ENCODE measurements at regions of chr10 and their contacts with region 1.

Region 1: GRCh38 chr10:6185039-6185716 is 17.6 kb upstream of the PFKFB3 start:
- DNase-seq: no peak
- ATAC-seq: no peak
- H3K4me3 ChIP-seq: no peak overlapping the region
- H3K4me3 Mint-ChIP-seq: peak overlapping the region in 1 of 3 donors; percentile 1
- H3K27ac ChIP-seq: no peak overlapping the region
- H3K27ac Mint-ChIP-seq: no peak overlapping the region
- H3K4me1 ChIP-seq: no peaks in the 10 kb centered on the region
- H3K4me1 Mint-ChIP-seq: peaks cover 7 to 36% (median 29%) of the 10 kb centered on the region in 3 donors
- H3K27me3 ChIP-seq: no peaks in the 10 kb centered on the region
- H3K27me3 Mint-ChIP-seq: no peaks in the 10 kb centered on the region

Region 2: DNA sequence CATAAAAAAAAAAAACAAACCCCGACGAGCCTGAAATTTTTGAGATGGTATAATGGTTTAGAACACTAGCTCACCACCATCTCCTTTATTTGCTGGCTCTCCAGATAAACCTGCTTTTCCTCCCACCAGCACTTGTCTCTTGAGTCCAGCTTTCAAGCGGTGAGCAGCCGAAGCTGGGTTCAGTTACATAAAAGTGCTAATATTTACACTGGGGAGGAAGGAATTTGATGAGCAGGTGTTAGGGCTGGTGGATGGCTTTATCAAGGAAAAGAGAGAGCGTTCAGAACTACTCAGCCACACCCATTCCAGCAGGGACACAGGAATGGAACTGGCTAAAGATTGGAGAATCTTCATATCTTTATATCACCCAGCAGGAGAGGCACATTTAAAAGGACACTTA is 667.0 kb before region 1 on chr10:
- CTCF ChIA-PET with region 1: no interaction called
- POLR2A ChIA-PET with region 1: no interaction called
- DNase-seq: no peak
- ATAC-seq: no peak
- H3K4me3 ChIP-seq: no peak overlapping the region
- H3K4me3 Mint-ChIP-seq: no peak overlapping the region
- H3K27ac ChIP-seq: no peak overlapping the region
- H3K27ac Mint-ChIP-seq: no peak overlapping the region
- H3K4me1 ChIP-seq: peaks cover 2 to 5% of the 10 kb centered on the region in 2 experiments
- H3K4me1 Mint-ChIP-seq: peaks cover 5 to 7% (median 5%) of the 10 kb centered on the region in 3 donors
- H3K27me3 ChIP-seq: peaks cover 0 to 11% of the 10 kb centered on the region in 2 experiments
- H3K27me3 Mint-ChIP-seq: peaks cover 3 to 12% of the 10 kb centered on the region in 2 donors

Region 3: DNA sequence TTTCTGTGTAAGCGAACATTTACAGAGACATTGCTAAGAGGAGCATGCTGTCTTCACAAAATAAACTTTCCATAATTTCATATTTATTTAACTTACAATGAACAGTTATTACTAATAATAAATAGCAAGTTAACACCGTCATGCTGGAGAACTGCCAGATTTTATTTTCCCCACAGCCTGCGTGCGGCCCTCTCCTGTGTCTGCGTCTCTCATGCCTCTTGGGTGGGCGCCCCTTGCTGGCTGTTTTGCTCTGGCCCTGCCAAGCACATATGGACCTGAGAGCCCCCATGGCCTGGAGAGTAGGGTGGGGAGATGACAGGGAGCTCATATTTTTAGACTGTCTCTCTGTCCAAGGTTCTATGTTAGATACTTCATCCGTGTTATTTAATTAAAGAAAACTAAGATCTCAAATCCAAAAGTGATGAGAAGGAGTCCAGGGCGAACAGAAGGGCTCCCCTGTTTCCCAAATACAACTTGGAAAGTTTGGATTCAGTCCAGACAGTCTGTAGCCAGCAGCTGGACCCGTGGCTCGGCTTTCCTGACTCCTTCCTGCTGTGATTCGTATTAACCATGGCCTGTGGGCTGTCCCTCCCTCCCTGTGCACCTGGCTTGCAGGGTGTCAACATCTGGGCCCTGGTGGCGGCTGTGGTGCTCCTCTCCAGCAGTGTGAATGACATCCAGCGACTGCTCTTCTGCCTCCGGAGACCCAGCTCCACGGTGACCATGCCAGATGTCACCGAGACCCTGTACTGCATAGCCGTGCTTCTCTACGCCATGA is 274.7 kb before region 1 on chr10:
- CTCF ChIA-PET with region 1: no interaction called
- POLR2A ChIA-PET with region 1: interaction called in 1 of 2 experiments, 19 read pairs
- DNase-seq: no peak
- ATAC-seq: no peak
- H3K4me3 ChIP-seq: no peak overlapping the region
- H3K4me3 Mint-ChIP-seq: no peak overlapping the region
- H3K27ac ChIP-seq: no peak overlapping the region
- H3K27ac Mint-ChIP-seq: no peak overlapping the region
- H3K4me1 ChIP-seq: no peaks in the 10 kb centered on the region
- H3K4me1 Mint-ChIP-seq: peaks cover 11 to 18% (median 17%) of the 10 kb centered on the region in 3 donors
- H3K27me3 ChIP-seq: no peaks in the 10 kb centered on the region
- H3K27me3 Mint-ChIP-seq: no peaks in the 10 kb centered on the region

Region 4: DNA sequence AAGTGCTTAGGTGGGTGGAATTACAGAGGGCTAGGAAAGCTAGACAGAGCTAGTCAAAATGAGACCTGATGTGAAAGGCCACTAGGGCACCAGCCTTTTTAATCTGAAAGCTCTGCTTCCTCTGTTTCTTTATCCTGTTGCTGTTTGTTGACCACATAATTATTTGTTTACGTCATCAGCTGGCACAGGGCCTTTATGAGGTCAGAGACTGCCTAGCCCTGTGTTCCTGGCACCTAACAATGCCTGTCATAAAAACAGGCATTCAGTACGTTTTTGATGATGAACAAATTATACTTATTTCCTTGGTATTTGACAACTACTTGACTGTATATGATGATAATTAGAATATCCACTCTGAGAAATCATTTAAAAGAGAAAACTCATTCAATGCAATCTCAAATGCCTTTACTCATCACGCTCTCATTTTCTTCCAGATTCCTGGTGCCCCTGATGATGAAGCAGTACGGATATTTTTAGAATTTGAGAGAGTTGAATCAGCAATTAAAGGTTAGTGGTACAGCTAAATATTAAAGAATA is 70.3 kb before region 1 on chr10:
- CTCF ChIA-PET with region 1: no interaction called
- POLR2A ChIA-PET with region 1: interaction called in 1 of 2 experiments, 10 read pairs
- DNase-seq: no peak
- ATAC-seq: no peak
- H3K4me3 ChIP-seq: no peak overlapping the region
- H3K4me3 Mint-ChIP-seq: no peak overlapping the region
- H3K27ac ChIP-seq: no peak overlapping the region
- H3K27ac Mint-ChIP-seq: peak overlapping the region; percentile 23 to 78
- H3K4me1 ChIP-seq: no peaks in the 10 kb centered on the region
- H3K4me1 Mint-ChIP-seq: peaks cover under 1 to 17% (median 11%) of the 10 kb centered on the region in 3 donors
- H3K27me3 ChIP-seq: no peaks in the 10 kb centered on the region
- H3K27me3 Mint-ChIP-seq: no peaks in the 10 kb centered on the region